ENCODE measurements at regions of chr5 and their contacts with region 1.

Region 1: DNA sequence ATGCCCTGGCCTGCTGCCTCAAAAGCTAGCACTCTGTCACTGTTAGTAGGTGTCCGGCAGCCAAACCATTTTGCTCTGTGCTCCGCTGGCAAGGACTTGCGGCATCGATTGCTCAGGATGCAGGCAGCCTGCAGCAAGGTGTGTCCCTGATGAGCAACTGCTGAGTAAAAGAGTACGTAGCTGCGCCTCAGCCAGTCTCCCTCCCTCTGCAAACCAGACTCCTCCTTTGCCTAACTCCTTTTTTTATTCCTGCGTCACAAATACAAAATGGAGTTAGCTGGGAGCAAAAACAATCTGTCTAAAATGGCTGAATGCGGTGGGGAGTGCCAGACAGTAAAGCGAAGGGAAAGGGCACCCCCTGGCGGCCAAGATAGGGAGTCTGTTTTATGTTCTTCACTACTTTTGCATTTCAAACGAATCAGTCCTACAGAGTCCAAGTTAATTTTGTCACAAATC is 61.1 kb downstream of the DIAPH1 start:
- DNase-seq: peak; percentile 86 to 98
- H3K4me3 ChIP-seq: no peak overlapping the region
- CTCF ChIP-seq: peak in 1 of 3 donors; percentile 42
- POLR2A ChIP-seq: no peak

Region 2: GRCh38 chr5:141412854-141413539 is 144.7 kb before region 1 on chr5 and contains the start of gene PCDHGA10:
- intact Hi-C with region 1: loop called (anchors 10 kb)
- DNase-seq: no peak
- H3K4me3 ChIP-seq: no peak within 1 kb of the TSS
- CTCF ChIP-seq: no peak
- POLR2A ChIP-seq: no peak
- total RNA-seq, gene PCDHGA10: 6.8 to 11.7 (median 8.3) TPM

Region 3: GRCh38 chr5:141605523-141606277 is 48.0 kb after region 1 on chr5:
- intact Hi-C with region 1: no loop called
- DNase-seq: peak in 1 of 2 donors; percentile 77
- H3K4me3 ChIP-seq: no peak overlapping the region
- CTCF ChIP-seq: no peak
- POLR2A ChIP-seq: no peak

Measured in lower leg skin (tissue), 4 donors.